ENCODE measurements at regions of chr12 and their contacts with region 1.

Region 1: GRCh38 chr12:53321074-53321814 is at the start of gene AAAS:
- DNase-seq: peak; percentile 98

Region 2: GRCh38 chr12:53166837-53167236 is 154.4 kb before region 1 on chr12:
- CTCF ChIA-PET with region 1: no interaction called
- POLR2A ChIA-PET with region 1: no interaction called
- DNase-seq: no peak

Region 3: DNA sequence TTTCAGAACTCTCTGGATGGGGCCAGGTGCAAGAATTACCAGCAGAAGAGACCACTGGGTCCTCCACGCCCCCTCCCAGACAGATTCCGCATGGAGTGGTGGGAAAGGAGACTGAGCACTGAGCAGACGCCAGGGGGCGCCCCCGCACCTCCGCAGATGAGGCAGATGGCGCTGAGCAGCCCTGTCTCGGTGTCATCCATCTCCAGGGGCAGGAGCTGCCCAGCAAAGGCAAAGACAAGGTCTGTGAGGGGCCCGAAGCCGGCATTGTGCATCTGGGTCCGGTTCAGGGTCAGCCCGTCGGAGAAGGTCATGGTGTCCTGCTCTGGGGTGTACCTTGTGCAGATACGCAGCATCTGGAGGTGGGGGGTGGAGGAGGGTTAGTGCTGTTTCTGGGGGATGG is 107.9 kb before region 1 on chr12:
- CTCF ChIA-PET with region 1: interaction called, 10 read pairs
- POLR2A ChIA-PET with region 1: interaction called, 11 read pairs
- DNase-seq: peak; percentile 88

Region 4: DNA sequence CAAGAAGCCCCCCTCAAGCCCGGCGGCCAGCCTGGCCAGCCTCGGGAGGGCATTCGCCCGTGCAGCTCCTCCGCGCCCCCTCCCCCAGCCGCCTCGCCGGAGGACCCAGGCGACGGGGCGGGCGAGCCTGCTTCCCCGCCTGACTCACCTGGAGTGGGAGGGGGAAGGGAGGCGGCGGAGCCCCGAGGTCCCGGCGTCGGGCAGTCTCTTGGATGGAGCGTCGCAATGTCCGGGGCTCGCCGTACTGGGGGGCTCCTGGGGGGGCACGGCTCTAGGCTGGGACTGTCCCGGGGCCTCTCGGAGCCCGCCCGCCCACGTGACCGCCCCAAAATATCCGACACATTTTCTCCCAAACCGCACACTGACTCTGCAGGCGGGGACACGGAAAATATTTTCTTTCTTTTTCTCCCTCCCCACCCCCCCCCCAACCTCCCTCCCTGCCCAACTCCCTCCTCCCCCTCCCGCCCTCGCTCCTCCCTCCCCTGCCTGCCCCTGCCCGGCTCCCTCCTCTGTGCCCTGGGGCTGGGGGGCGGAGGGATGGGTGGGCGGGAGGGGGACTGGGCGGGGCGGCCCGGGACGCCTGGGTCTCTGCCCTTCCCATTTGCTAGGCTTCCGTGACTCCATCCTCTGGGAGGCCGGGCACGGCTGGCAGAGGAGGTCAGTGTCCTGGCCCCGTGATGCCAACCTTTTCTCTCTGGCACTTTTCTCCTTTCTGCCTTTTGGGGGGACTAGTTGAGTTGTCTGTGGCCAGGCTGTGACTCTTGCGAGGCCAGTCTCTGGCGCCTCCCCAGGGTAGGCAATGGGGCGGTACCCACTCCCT is 89.2 kb before region 1 on chr12 and contains the start of gene RARG:
- CTCF ChIA-PET with region 1: no interaction called
- POLR2A ChIA-PET with region 1: no interaction called
- DNase-seq: no peak

Region 5: GRCh38 chr12:53295070-53295890 is 26.0 kb before region 1 on chr12 and contains the start of gene PFDN5:
- CTCF ChIA-PET with region 1: interaction called, 9 read pairs
- POLR2A ChIA-PET with region 1: interaction called, 51 read pairs
- DNase-seq: peak; percentile 89

Region 6: GRCh38 chr12:53352331-53353256 is 31.4 kb after region 1 on chr12:
- CTCF ChIA-PET with region 1: interaction called, 7 read pairs
- POLR2A ChIA-PET with region 1: interaction called, 12 read pairs
- DNase-seq: peak; percentile 81

Region 7: DNA sequence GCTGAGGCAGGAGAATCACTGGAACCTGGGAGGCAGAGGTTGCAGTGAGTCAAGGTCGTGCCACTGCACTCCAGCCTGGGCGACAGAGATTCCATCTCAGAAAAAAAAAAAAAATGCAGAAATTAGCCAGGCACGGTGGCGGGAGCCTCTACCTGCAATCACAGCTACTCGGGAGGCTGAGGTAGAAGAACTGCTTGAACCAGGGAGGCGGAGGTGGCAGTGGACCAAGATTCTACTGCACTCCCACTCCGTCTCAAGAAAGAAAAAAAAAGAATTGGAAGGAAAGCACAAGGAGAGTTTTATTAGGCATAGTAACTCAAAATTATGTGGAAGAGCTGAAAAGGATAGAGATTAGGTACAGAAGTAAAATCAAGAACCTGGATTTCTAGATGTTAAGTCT is 81.6 kb after region 1 on chr12:
- CTCF ChIA-PET with region 1: no interaction called
- POLR2A ChIA-PET with region 1: no interaction called
- DNase-seq: no peak

Region 8: DNA sequence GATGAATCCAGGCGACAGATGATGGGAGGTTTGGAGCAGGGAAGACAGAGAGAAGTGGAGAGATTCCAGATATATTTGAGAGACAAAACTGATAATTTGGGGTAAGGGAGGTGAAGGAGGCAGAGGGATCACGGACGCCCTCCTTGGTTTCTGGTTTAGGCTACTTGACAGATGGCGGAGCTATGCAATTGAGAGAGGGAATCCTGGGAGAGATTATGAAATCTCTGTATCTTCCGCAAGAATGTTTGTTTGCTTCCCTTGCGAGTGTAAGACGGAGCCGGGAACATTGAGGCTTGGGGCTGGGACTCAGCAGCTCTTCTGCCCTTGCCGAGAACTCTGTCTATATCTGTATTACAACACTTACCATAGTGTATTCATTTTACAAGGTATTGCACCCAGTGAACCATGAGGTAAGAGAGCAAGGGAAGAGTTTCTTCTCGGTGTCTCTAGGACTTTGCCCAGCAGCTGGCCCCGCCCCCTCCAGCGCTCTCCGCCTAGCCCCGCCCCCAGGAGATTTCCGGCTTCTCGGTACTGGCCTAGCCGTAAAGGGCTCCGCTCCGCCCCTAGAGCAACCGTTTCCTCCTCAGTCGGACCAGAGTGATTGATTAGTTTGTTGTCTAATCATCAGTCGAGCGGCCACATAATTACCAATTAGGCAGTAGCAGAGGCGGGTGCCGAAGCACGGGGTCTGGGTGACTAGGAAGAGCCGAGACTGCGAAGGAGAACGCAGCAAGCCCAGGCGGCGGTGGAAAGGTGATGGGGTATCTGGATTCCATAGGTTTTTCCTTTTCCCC is 120.0 kb after region 1 on chr12 and contains the start of gene PRR13:
- CTCF ChIA-PET with region 1: interaction called, 3 read pairs
- POLR2A ChIA-PET with region 1: interaction called, 13 read pairs
- DNase-seq: peak; percentile 97

Region 9: GRCh38 chr12:53659011-53659551 is 337.8 kb after region 1 on chr12:
- CTCF ChIA-PET with region 1: no interaction called
- POLR2A ChIA-PET with region 1: no interaction called
- DNase-seq: no peak